Mucosa of descending colon (tissue), 3 donors: ENCODE measurements at regions of chr7 and their contacts with region 1.

Region 1: GRCh38 chr7:74449809-74450397 is 3.8 kb upstream of the GTF2IRD1 start:
- DNase-seq: peak in 2 of 3 donors; percentile 44 to 88
- ATAC-seq: peak; percentile 39
- H3K4me3 ChIP-seq: no peak overlapping the region
- H3K4me1 ChIP-seq: peaks cover 19% of the 10 kb centered on the region
- CTCF ChIP-seq: peak; percentile 74

Region 2: DNA sequence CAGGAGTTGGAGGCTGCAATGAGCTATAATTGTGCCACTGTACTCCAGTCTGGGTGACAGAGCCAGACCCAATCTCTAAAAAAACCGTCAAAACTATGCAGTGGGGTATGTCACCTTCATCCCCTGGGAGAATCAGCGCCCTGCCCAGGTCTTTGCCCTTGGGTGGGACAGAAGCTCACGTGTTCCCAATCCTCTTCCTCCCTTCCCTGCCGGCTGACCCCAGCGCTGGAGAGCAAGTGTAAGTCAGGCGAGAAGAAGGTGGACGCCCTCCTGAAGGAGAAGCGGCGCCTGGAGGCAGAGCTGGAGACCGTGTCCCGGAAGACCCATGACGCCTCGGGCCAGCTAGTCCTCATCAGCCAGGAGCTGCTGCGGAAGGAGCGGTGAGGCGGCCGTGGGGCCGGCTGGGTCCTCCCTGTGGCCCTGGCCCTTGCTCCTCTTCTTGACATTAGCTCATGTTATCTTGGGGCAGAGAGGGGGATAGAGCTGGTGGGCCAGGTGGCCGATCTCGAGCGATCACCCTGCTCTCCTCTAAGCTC is 61.0 kb before region 1 on chr7:
- intact Hi-C with region 1: no loop called
- DNase-seq: no peak
- ATAC-seq: no peak
- H3K4me3 ChIP-seq: no peak overlapping the region
- H3K4me1 ChIP-seq: no peaks in the 10 kb centered on the region
- CTCF ChIP-seq: no peak

Region 3: DNA sequence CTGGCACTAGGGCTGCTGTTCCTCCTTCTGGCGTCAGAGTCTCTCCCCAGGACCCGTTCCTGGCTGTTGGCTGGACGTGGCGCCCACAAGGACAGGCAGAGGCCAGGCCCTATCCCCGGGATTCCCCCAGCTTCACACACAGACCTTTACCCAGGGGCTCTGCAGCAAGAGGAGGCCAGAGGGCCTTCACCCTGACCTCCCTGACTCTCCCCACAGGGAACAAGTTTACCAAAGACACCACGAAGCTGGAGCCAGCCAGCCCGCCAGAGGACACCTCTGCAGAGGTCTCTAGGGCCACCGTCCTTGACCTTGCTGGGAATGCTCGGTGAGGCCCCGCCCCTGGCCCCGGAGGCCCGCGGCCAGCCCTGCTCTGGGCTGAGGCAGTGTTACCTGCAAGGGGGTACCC is 86.1 kb after region 1 on chr7:
- intact Hi-C with region 1: loop called (anchors 10 kb)
- DNase-seq: no peak
- ATAC-seq: no peak
- H3K4me3 ChIP-seq: no peak overlapping the region
- H3K4me1 ChIP-seq: no peaks in the 10 kb centered on the region
- CTCF ChIP-seq: no peak

Region 4: GRCh38 chr7:74544706-74545469 is 95.0 kb after region 1 on chr7:
- intact Hi-C with region 1: loop called in 1 of 2 experiments (anchors 10 kb)
- DNase-seq: peak in 2 of 3 donors; percentile 68 to 76
- ATAC-seq: peak; percentile 91
- H3K4me3 ChIP-seq: no peak overlapping the region
- H3K4me1 ChIP-seq: peaks cover 8% of the 10 kb centered on the region
- CTCF ChIP-seq: peak; percentile 54

Region 5: GRCh38 chr7:74612015-74612829 is 162.3 kb after region 1 on chr7:
- intact Hi-C with region 1: no loop called
- DNase-seq: no peak
- ATAC-seq: no peak
- H3K4me3 ChIP-seq: no peak overlapping the region
- H3K4me1 ChIP-seq: peaks cover 6% of the 10 kb centered on the region
- CTCF ChIP-seq: no peak